Activated T-helper 2 cell treated with anti-CD3 and anti-CD28 coated beads, Interferon-gamma antibody, Interleukin-2, Interleukin-4, amounts not matched to agents 10 μg/mL and 5 μg/mL and 100 μg/mL, durations not matched to agents 14 hours and 24 hours and 36 hours (primary cell): ENCODE measurements at regions of chrX and their contacts with region 1.

Region 1: GRCh38 chrX:39427906-39428305 is 626.6 kb downstream of the MID1IP1 start:
- DNase-seq: no peak
- H3K4me3 Mint-ChIP-seq: no peak overlapping the region
- H3K27ac Mint-ChIP-seq: peak overlapping the region; percentile 96
- H3K4me1 Mint-ChIP-seq: peaks cover 60% of the 10 kb centered on the region
- H3K27me3 Mint-ChIP-seq: no peaks in the 10 kb centered on the region

Region 2: DNA sequence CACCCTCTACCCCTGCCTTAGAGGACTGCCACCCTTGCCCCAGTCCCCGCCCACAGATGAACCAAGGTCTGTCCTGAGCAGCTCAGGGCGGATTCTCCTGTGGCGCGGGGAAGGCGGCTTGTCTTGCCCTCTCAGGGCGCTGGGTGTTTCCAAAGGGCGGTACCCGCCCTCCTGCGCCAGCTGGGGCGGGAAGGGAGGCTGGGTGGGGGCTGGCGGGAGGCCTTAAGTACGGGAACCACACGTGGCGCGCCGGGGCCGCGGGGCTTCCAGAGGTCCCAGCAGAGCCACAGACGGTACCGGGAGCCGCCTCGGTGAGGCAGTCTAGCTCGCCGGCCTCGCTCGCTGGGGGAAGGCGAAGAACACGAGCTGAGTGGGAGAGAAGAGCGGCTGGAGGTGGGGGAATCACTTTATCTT is 265.6 kb before region 1 on chrX:
- intact Hi-C with region 1: loop called (anchors 2 kb)
- DNase-seq: peak; percentile 24
- H3K4me3 Mint-ChIP-seq: peak overlapping the region; percentile 56
- H3K27ac Mint-ChIP-seq: peak overlapping the region; percentile 98
- H3K4me1 Mint-ChIP-seq: peaks cover 65% of the 10 kb centered on the region
- H3K27me3 Mint-ChIP-seq: no peaks in the 10 kb centered on the region

Region 3: DNA sequence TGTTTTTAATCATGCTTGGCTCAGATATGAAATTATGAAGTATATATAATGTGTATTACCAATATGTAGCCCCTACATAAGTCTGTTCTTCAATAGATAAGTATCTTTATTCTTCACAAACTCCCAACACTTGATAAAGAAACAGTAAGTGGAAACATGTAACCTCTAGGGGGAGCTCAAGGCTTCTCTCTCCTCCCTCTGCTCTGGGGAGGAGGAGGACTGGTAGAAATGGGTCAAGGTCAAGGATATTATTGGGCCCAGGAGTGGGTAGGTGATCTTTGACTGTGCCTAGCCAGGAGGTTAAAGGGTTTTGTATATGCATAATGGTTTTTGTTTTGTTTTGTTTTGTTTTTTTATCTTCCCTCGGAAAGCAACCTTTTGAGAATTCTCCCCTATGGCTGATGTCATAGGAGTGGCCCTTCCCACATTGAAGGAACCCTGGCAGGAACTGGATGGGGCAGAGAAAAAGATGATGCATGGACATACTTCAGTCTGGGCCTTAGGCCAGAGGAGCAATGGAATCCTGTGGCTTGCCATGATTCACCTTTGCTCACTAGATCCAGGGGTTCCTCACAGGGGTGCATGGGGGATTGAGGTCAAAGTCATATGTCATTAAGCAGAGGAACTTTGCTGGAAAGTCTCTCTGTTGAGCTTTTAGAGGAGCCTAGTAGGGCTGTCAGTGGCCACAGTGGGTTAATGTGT is 166.3 kb before region 1 on chrX:
- intact Hi-C with region 1: loop called (anchors 2 kb)
- DNase-seq: no peak
- H3K4me3 Mint-ChIP-seq: no peak overlapping the region
- H3K27ac Mint-ChIP-seq: peak overlapping the region; percentile 75
- H3K4me1 Mint-ChIP-seq: peaks cover 40% of the 10 kb centered on the region
- H3K27me3 Mint-ChIP-seq: no peaks in the 10 kb centered on the region

Region 4: DNA sequence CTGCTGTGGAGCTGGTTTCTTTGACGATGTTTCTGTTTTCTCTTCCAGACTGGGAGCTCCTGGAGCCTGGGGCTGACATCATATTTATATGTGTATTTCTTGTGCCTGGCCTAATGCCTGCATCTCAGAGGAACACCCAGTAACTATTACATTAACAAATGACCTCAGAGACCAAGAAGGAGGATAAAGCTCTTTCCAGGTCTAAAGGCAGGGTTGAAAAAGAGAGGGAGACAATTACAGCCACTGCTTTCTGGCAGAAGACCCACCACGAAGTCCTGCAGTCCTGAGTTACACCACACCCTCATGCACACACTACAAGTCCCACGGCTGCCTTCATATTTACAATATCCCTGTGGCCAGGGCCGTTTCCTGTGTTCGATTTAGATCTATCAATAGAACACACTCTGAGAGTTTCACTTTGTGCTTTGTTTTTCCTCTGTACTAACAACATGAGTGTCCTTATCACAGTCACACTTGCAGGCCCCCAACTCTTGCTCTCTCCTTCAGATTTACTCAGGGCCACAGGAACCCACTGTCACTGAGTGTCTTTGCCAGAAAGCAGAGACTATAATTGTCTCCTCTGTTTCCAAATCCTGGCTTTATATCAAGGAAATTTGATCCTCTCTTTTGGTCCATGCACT is 91.1 kb before region 1 on chrX:
- intact Hi-C with region 1: loop called (anchors 1 kb)
- DNase-seq: peak; percentile 17
- H3K4me3 Mint-ChIP-seq: no peak overlapping the region
- H3K27ac Mint-ChIP-seq: peak overlapping the region; percentile 75
- H3K4me1 Mint-ChIP-seq: peaks cover 48% of the 10 kb centered on the region
- H3K27me3 Mint-ChIP-seq: no peaks in the 10 kb centered on the region

Region 5: GRCh38 chrX:39578354-39578869 is 150.5 kb after region 1 on chrX:
- intact Hi-C with region 1: loop called (anchors 1 kb)
- DNase-seq: peak; percentile 31
- H3K4me3 Mint-ChIP-seq: peak overlapping the region; percentile 52
- H3K27ac Mint-ChIP-seq: peak overlapping the region; percentile 76
- H3K4me1 Mint-ChIP-seq: peaks cover 34% of the 10 kb centered on the region
- H3K27me3 Mint-ChIP-seq: no peaks in the 10 kb centered on the region

Region 6: DNA sequence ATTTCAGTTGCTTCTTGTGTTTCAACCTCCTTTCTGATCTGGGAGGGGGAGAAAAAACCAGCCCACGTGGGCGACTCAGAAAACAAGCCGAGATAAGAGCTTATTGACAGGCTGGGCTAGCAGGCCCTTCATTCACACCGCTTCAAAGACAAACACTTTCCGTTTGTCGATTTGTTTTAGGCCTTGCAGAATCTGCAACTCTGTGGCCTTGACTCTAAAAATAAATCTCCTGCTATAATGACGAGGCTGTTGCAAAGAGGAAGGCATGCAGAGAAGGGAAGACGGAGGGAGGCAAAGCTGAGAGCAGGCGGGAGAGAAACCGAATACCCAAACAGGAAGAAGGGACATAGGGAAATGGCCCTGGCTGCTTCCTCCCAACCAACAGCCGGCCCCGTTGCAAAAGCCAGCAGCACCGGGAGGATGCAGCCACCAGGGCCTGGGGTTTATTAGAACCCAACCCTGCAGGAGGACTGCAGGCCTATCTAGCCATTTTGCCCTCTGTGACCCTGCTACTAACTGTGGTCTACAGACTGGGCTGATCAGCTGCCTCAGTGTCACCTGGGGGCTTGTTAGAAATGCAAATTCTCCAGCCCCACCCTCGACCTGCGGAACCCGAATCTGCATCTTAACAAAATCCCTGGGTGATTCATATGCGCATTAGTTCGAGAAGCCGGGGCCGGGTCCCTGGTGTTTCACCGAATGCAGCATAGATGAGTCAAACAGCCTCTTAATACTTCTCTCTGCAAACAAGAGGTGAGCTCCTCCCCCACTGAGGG is 344.3 kb after region 1 on chrX:
- intact Hi-C with region 1: loop called (anchors 5 kb)
- DNase-seq: peak; percentile 37
- H3K4me3 Mint-ChIP-seq: peak overlapping the region; percentile 69
- H3K27ac Mint-ChIP-seq: peak overlapping the region; percentile 99
- H3K4me1 Mint-ChIP-seq: peaks cover 45% of the 10 kb centered on the region
- H3K27me3 Mint-ChIP-seq: no peaks in the 10 kb centered on the region